A549 (cell line): ENCODE measurements at regions of chr5 and their contacts with region 1.

Region 1: GRCh38 chr5:2038321-2039179 is 155.8 kb upstream of the IRX4 start:
- DNase-seq: peak; percentile 61 to 74
- ATAC-seq: peak; percentile 92 to 99
- H3K4me3 ChIP-seq: peak overlapping the region; percentile 29
- H3K27ac ChIP-seq: peak overlapping the region in 1 of 2 experiments; percentile 31; a peak in 3 of 6 replicates
- H3K4me1 ChIP-seq: no peaks in the 10 kb centered on the region
- CTCF ChIP-seq: peak; percentile 95
- EP300 ChIP-seq: no peak
- POLR2A ChIP-seq: no peak; the same call in 1 of the 2 replicates
- RAD21 ChIP-seq: peak in 1 of 2 experiments; percentile 24; a peak in 4 of 5 replicates

Region 2: GRCh38 chr5:1763548-1763911 is 275.0 kb before region 1 on chr5:
- CTCF ChIA-PET with region 1: interaction called, 21 read pairs
- POLR2A ChIA-PET with region 1: no interaction called
- DNase-seq: peak; percentile 52 to 72
- ATAC-seq: peak; percentile 85 to 93
- H3K4me3 ChIP-seq: no peak overlapping the region
- H3K27ac ChIP-seq: no peak overlapping the region
- H3K4me1 ChIP-seq: no peaks in the 10 kb centered on the region
- CTCF ChIP-seq: peak; percentile 61
- EP300 ChIP-seq: no peak
- POLR2A ChIP-seq: no peak
- RAD21 ChIP-seq: peak; percentile 69 to 81